Activated T-helper 1 cell treated with anti-CD3 and anti-CD28 coated beads, Interleukin-12 subunit alpha, Interleukin-12 subunit beta, Interleukin-2, Interleukin-4 antibody, amounts not matched to agents 30 ng/mL and 10 ng/mL and 1 ng/mL, durations not matched to agents 14 hours and 24 hours and 36 hours (primary cell): ENCODE measurements at regions of chr2 and their contacts with region 1.

Region 1: GRCh38 chr2:197310271-197310985 is at the start of gene ANKRD44:
- DNase-seq: peak; percentile 87
- H3K4me3 Mint-ChIP-seq: peak within 1 kb of the TSS; percentile 91
- H3K27ac Mint-ChIP-seq: peak within 1 kb of the TSS; percentile 98
- H3K4me1 Mint-ChIP-seq: peaks cover 68% of the 10 kb centered on the region
- H3K27me3 Mint-ChIP-seq: no peaks in the 10 kb centered on the region
- total RNA-seq, gene ANKRD44: 153 and 159 TPM in 2 replicates

Region 2: GRCh38 chr2:197113275-197113711 is 197.1 kb before region 1 on chr2:
- intact Hi-C with region 1: loop called (anchors 1 kb)
- DNase-seq: no peak
- H3K4me3 Mint-ChIP-seq: no peak overlapping the region
- H3K27ac Mint-ChIP-seq: no peak overlapping the region
- H3K4me1 Mint-ChIP-seq: peaks cover 18% of the 10 kb centered on the region
- H3K27me3 Mint-ChIP-seq: no peaks in the 10 kb centered on the region

Region 3: GRCh38 chr2:197198890-197199289 is 111.5 kb before region 1 on chr2:
- intact Hi-C with region 1: loop called (anchors 1 kb)
- DNase-seq: peak; percentile 90
- H3K4me3 Mint-ChIP-seq: peak overlapping the region; percentile 87
- H3K27ac Mint-ChIP-seq: peak overlapping the region; percentile 98
- H3K4me1 Mint-ChIP-seq: peaks cover 91% of the 10 kb centered on the region
- H3K27me3 Mint-ChIP-seq: peaks cover 2% of the 10 kb centered on the region

Region 4: GRCh38 chr2:197255543-197255942 is 54.9 kb before region 1 on chr2:
- intact Hi-C with region 1: loop called (anchors 1 kb)
- DNase-seq: peak; percentile 78
- H3K4me3 Mint-ChIP-seq: peak overlapping the region; percentile 83
- H3K27ac Mint-ChIP-seq: peak overlapping the region; percentile 97
- H3K4me1 Mint-ChIP-seq: peaks cover 80% of the 10 kb centered on the region
- H3K27me3 Mint-ChIP-seq: no peaks in the 10 kb centered on the region

Region 5: DNA sequence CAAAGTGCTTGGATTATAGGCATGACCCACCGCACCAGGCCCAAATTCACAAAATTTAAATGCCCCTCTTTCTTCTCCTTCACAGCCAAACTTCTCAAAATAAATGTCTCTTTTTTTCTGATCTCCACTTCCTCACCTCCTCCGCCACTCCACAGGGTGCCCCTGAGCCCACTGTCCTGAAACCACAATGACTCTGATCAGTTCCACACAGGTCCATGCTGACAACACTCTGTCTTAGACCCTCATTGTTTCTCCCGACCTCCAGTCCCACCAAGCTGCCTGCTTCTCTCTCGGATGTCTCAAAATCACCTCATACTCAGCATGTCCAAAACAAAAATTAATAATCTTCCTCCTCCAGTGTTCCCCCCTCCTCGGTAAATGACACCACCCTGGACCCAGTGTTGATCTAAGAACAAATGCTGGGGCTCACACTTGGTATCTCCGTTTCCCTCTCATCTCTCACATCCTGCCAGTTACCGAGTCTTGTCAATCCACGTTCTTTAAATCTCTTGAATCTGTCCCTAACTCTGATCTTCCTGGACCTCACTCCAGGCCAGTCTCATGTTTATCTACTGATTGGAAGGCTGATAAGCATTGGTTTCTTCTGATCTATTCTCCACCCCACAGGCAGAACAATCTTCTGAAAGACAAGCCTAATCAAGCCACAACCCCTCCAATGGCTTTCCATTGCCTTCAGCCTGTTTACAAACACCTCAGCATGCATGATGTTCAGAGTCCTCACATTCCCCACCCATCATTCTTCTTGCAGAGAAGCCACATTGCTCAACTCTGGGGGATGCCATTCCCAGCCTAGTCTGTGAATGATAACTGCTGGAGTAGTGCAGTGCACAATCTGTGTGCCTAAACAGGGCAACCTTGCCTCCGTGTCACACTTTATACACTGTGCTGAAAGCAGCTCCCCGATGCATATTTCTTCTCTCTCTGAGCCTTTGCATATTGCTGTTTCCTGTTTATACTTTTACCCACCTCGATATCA is 12.6 kb after region 1 on chr2:
- intact Hi-C with region 1: loop called (anchors 1 kb)
- DNase-seq: no peak
- H3K4me3 Mint-ChIP-seq: peak overlapping the region; percentile 71
- H3K27ac Mint-ChIP-seq: peak overlapping the region; percentile 87
- H3K4me1 Mint-ChIP-seq: peaks cover 50% of the 10 kb centered on the region
- H3K27me3 Mint-ChIP-seq: no peaks in the 10 kb centered on the region

Region 6: GRCh38 chr2:197356136-197356535 is 45.7 kb after region 1 on chr2:
- intact Hi-C with region 1: no loop called
- DNase-seq: no peak
- H3K4me3 Mint-ChIP-seq: peak overlapping the region; percentile 63
- H3K27ac Mint-ChIP-seq: peak overlapping the region; percentile 50
- H3K4me1 Mint-ChIP-seq: peaks cover 32% of the 10 kb centered on the region
- H3K27me3 Mint-ChIP-seq: no peaks in the 10 kb centered on the region